ENCODE measurements at regions of chr3 and their contacts with region 1.

Region 1: DNA sequence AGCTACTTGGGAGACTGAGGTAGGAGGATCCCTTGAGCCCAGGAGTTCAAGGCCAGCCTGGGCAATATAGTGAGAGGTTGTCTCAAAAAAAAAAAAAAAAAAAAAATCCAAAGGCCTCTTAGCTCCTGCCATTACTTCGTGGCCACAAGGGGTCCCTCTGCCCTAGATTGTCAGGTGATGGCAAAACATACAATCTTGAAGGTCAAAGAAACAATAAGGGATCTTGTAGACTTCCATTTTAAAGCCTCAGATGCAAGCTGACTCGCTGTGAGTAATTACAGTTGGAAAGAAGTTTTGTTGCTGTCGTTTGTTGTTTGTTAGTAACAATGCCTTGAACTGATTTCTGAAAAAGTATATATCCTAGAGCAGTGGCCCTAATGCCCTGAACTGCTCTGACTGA is 55.9 kb upstream of the PLCL2 start:
- DNase-seq: no peak
- ATAC-seq: peak; percentile 60
- H3K4me3 Mint-ChIP-seq: no peak overlapping the region
- H3K27ac Mint-ChIP-seq: no peak overlapping the region
- H3K4me1 Mint-ChIP-seq: peaks cover 11% of the 10 kb centered on the region
- H3K27me3 Mint-ChIP-seq: no peaks in the 10 kb centered on the region
- CTCF ChIP-seq: no peak

Region 2: GRCh38 chr3:17032407-17033034 is 203.7 kb after region 1 on chr3:
- CTCF ChIA-PET with region 1: interaction called, 8 read pairs
- POLR2A ChIA-PET with region 1: no interaction called
- intact Hi-C with region 1: loop called (anchors 2 kb)
- DNase-seq: no peak
- ATAC-seq: peak; percentile 31
- H3K4me3 Mint-ChIP-seq: no peak overlapping the region
- H3K27ac Mint-ChIP-seq: no peak overlapping the region
- H3K4me1 Mint-ChIP-seq: peaks cover 40% of the 10 kb centered on the region
- H3K27me3 Mint-ChIP-seq: no peaks in the 10 kb centered on the region
- CTCF ChIP-seq: no peak

Region 3: GRCh38 chr3:17412950-17413530 is 584.2 kb after region 1 on chr3:
- CTCF ChIA-PET with region 1: no interaction called
- POLR2A ChIA-PET with region 1: no interaction called
- intact Hi-C with region 1: loop called (anchors 5 kb)
- DNase-seq: no peak
- ATAC-seq: peak; percentile 76
- H3K4me3 Mint-ChIP-seq: no peak overlapping the region
- H3K27ac Mint-ChIP-seq: no peak overlapping the region
- H3K4me1 Mint-ChIP-seq: no peaks in the 10 kb centered on the region
- H3K27me3 Mint-ChIP-seq: no peaks in the 10 kb centered on the region
- CTCF ChIP-seq: peak; percentile 69

Measured in activated B cell treated with CpG ODN at 0.5 μM for 24 hours (primary cell).